ENCODE measurements at regions of chr17 and their contacts with region 1.

Region 1: DNA sequence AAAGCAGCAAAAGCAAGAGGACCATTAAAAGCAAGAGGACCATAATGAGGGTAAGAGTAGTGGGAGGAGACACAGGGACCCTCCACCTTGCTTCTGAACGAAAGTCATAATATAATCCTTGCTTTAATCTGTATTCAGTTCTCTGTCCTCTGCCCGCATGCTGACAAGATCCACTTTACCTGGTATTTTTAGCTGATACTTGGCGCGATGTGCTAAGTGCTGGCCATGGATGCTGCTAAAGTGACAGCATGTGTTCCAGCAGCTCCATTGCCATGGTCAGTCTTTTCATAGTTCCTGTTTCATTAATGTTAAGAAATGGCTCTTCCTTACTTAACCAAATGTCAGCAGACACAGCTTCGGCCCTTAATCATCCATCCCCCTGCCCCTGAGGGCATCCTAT is 86.8 kb downstream of the CA10 start:
- DNase-seq: no peak
- H3K4me3 ChIP-seq: no peak overlapping the region
- H3K27ac ChIP-seq: no peak overlapping the region
- H3K4me1 ChIP-seq: no peaks in the 10 kb centered on the region
- H3K27me3 ChIP-seq: no peaks in the 10 kb centered on the region
- CTCF ChIP-seq: no peak
- POLR2A ChIP-seq: no peak

Region 2: DNA sequence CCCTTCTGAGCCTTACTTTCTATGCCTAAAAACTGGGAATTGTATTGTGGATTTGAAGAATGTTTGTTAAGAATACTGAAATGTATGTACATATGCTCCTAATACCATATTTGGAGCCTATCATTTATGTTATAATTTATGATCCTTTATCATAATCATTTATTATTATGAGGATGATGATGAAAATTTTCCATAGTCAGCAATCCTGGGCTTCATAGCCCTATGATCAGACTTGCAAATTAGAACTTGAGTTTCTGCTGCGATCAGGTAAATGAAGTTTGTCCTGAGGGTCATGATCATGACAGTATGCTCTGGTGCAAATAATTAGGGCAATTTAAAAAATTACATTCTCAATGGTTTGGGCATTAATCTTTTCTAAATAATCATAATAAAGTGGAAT is 60.6 kb before region 1 on chr17:
- intact Hi-C with region 1: loop called (anchors 10 kb)
- DNase-seq: no peak
- H3K4me3 ChIP-seq: no peak overlapping the region
- H3K27ac ChIP-seq: no peak overlapping the region
- H3K4me1 ChIP-seq: no peaks in the 10 kb centered on the region
- H3K27me3 ChIP-seq: no peaks in the 10 kb centered on the region
- CTCF ChIP-seq: no peak
- POLR2A ChIP-seq: no peak